ENCODE measurements at regions of chrX and their contacts with region 1.

Region 1: DNA sequence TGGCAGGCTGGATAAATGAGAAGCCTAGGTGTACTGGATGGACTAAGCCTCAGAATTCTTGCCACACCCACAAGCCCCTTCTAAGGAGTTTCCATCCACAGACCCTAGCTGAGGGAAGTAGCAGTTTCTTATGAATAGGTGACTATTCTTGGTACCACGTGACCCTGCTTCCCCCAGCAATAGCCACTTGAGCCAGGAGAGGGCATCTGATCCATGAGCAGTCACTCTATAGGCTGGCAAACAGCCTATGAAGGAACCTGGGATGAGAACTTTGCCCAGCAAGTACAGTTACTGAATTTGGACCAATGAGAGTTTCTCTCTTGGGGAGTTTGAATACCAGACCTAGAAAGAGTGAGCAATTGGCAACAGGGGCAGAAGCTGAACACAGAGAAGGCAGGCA is 84.0 kb downstream of the RTL9 start:
- DNase-seq: peak; percentile 35
- H3K4me3 ChIP-seq: no peak overlapping the region
- H3K27ac ChIP-seq: no peak overlapping the region
- H3K4me1 ChIP-seq: peaks cover 9% of the 10 kb centered on the region
- H3K27me3 ChIP-seq: peaks cover 2% of the 10 kb centered on the region
- CTCF ChIP-seq: peak; percentile 31 to 33

Region 2: DNA sequence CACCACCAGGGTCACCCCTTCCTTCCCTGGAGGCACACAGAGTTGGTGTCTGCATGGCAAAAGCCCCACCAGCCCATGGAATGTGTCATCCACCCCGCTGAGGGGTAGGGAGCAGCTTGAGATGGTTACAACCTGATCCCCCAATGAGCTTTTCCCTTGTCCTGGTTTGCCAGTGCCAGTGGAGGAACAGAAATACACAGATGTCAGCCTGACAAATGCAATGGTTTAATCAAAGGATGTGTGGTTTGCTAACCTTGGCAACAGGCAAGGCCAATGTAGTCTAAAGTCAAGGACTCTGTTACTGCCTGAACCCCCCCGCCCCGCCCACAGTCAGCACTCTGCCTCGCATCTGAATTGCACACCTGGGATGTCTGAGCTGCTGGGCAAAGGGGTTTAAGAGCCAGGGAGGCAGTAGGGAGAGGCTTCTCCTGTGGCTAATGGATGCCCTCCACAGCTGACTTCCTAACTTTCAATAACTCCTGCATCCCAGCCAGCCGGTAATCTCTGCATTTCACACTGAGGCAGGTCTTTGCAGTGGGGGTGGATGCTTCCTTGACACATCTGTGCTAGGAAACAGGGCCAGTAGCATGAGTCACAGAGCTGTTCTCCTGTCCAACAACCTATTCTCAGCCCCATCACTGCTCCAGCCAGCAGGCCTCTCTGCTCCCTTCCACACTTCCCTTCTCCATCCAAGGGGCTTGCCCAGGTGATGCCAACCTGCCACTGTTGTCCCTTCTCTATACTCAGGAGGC is 262.3 kb before region 1 on chrX:
- CTCF ChIA-PET with region 1: no interaction called
- dilution Hi-C with region 1: no loop called
- in situ Hi-C with region 1: no loop called
- intact Hi-C with region 1: no loop called
- DNase-seq: peak; percentile 66
- H3K4me3 ChIP-seq: no peak overlapping the region
- H3K27ac ChIP-seq: peak overlapping the region; percentile 17
- H3K4me1 ChIP-seq: peaks cover 22% of the 10 kb centered on the region
- H3K27me3 ChIP-seq: no peaks in the 10 kb centered on the region
- CTCF ChIP-seq: no peak

Region 3: GRCh38 chrX:110588164-110588563 is 145.5 kb after region 1 on chrX:
- CTCF ChIA-PET with region 1: no interaction called
- dilution Hi-C with region 1: no loop called
- in situ Hi-C with region 1: no loop called
- intact Hi-C with region 1: no loop called
- DNase-seq: no peak
- H3K4me3 ChIP-seq: no peak overlapping the region
- H3K27ac ChIP-seq: no peak overlapping the region
- H3K4me1 ChIP-seq: no peaks in the 10 kb centered on the region
- H3K27me3 ChIP-seq: peaks cover 9% of the 10 kb centered on the region
- CTCF ChIP-seq: no peak

Region 4: DNA sequence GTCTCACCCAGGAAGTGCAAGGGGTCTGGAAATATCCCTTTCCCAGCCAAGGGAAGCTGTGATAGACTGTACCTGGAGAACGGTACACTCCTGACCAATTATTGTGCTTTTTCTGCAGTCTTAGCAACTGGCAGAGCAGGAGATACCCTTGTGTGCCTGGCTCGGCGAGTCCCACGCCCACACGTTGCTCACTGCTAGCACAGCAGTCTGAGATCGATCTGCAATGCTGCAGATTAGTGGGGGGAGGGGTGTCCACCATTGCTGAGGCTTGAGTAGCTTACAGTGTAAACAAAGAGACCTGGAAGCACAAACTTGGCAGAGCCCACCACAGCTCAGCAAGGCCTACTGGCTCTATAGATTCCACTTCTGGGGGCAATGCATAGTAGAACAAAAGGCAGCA is 214.4 kb after region 1 on chrX:
- CTCF ChIA-PET with region 1: no interaction called
- dilution Hi-C with region 1: loop called (anchors 10 kb)
- in situ Hi-C with region 1: no loop called
- intact Hi-C with region 1: no loop called
- DNase-seq: no peak
- H3K4me3 ChIP-seq: no peak overlapping the region
- H3K27ac ChIP-seq: no peak overlapping the region
- H3K4me1 ChIP-seq: no peaks in the 10 kb centered on the region
- H3K27me3 ChIP-seq: no peaks in the 10 kb centered on the region
- CTCF ChIP-seq: no peak

Region 5: GRCh38 chrX:110847334-110847733 is 404.7 kb after region 1 on chrX:
- CTCF ChIA-PET with region 1: no interaction called
- dilution Hi-C with region 1: loop called (anchors 5 kb)
- in situ Hi-C with region 1: loop called (anchors 5 to 10 kb)
- intact Hi-C with region 1: no loop called
- DNase-seq: peak; percentile 44
- H3K4me3 ChIP-seq: no peak overlapping the region
- H3K27ac ChIP-seq: no peak overlapping the region
- H3K4me1 ChIP-seq: no peaks in the 10 kb centered on the region
- H3K27me3 ChIP-seq: no peaks in the 10 kb centered on the region
- CTCF ChIP-seq: peak; percentile 58 to 60